HCT116 (cell line): ENCODE measurements at regions of chr17 and their contacts with region 1.

Region 1: DNA sequence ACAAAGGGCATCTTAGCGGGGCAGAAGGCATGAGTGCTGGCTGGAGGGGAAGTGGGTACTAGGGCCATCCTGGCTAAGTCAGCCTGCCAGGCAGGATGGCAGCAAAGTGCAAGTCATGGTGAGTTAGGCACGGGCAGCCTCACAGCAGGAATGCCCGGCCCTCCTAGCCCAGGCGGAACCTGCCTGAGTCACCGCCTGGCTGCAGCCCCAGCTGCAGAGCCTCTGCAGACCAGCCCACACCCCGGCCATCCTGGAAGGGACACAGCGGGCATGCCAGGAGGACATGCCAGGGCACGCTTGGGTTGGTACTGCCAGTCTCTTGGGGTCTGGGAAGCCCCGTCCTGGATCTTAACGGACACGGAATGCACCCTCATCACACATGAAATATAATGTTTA is 4.9 kb upstream of the ALDH3A1 start:
- DNase-seq: peak; percentile 79
- ATAC-seq: peak; percentile 85
- H3K4me3 ChIP-seq: peak overlapping the region; percentile 15 to 34
- H3K27ac ChIP-seq: peak overlapping the region; percentile 90
- H3K4me1 ChIP-seq: peaks cover 38 to 47% of the 10 kb centered on the region in 2 experiments
- H3K27me3 ChIP-seq: no peaks in the 10 kb centered on the region
- CTCF ChIP-seq: no peak
- POLR2A ChIP-seq: no peak
- RAD21 ChIP-seq: no peak

Region 2: GRCh38 chr17:19377602-19378392 is 375.2 kb before region 1 on chr17:
- CTCF ChIA-PET with region 1: interaction called, 4 read pairs
- POLR2A ChIA-PET with region 1: interaction called, 6 read pairs
- RAD21 ChIA-PET with region 1: no interaction called
- intact Hi-C with region 1: loop called (anchors 5 kb)
- DNase-seq: peak; percentile 96
- ATAC-seq: peak; percentile 92
- H3K4me3 ChIP-seq: peak overlapping the region; percentile 67 to 94
- H3K27ac ChIP-seq: peak overlapping the region; percentile 84
- H3K4me1 ChIP-seq: peaks cover 9 to 18% of the 10 kb centered on the region in 2 experiments; a peak in 3 of 4 replicates
- H3K27me3 ChIP-seq: no peaks in the 10 kb centered on the region
- CTCF ChIP-seq: no peak
- POLR2A ChIP-seq: peak; percentile 83
- RAD21 ChIP-seq: no peak

Region 3: DNA sequence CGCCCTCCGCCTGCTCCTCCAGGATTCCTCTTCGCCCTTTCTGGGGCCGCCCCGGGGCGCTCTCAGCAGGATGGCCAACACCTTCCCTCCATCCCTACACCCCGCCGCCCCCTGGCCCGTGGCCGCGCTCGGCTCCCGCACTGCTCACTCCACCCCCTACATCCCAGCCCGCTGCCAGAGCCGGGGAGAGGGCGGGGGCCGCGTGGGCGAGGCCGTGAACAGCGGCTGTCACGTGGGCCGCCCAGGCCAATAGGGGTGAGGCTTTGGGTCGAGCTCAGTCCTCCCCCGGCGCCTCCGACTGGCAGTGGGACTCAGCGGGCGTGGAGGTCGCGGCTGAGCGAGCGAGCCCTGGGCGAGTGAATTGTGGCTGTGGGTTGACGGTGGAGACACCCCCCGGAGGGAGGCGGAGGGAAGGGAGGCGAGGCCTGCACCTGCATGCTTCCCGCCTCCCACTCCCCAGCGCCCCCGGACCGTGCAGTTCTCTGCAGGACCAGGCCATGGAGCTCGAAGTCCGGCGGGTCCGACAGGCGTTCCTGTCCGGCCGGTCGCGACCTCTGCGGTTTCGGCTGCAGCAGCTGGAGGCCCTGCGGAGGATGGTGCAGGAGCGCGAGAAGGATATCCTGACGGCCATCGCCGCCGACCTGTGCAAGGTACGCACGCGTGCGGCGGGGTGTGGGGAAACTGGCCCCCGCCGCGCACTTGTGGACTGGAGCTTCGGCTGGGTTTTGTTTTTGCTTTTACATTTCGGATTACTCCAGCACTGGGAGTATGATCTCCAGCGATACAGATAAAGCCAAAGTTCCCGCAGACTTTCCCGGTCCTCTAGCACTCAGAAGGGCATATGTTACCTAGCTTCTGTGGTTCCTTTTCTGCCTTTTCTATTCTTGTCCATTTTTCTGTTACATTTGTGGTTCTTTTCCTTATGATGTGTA is 104.3 kb before region 1 on chr17 and contains the start of gene ALDH3A2:
- CTCF ChIA-PET with region 1: interaction called, 7 read pairs
- POLR2A ChIA-PET with region 1: interaction called, 13 read pairs
- RAD21 ChIA-PET with region 1: interaction called in 1 of 2 experiments, 4 read pairs
- intact Hi-C with region 1: loop called (anchors 5 kb)
- DNase-seq: peak; percentile 85
- ATAC-seq: peak; percentile 85
- H3K4me3 ChIP-seq: peak within 1 kb of the TSS; percentile 52 to 69
- H3K27ac ChIP-seq: peak within 1 kb of the TSS; percentile 99
- H3K4me1 ChIP-seq: peaks cover 53 to 73% of the 10 kb centered on the region in 2 experiments
- H3K27me3 ChIP-seq: no peaks in the 10 kb centered on the region
- CTCF ChIP-seq: peak in 1 of 3 experiments; percentile 17; a peak in 1 of 6 replicates
- POLR2A ChIP-seq: peak; percentile 77
- RAD21 ChIP-seq: peak; percentile 39
- total RNA-seq, gene ALDH3A2: 86.8 TPM